HEK293T (cell line): ENCODE measurements at regions of chr13 and their contacts with region 1.

Region 1: GRCh38 chr13:95349267-95349666 is 48.0 kb upstream of the ABCC4 start:
- DNase-seq: no peak

Region 2: GRCh38 chr13:95156208-95156607 is 193.1 kb before region 1 on chr13:
- CTCF ChIA-PET with region 1: interaction called, 11 read pairs
- POLR2A ChIA-PET with region 1: no interaction called
- DNase-seq: no peak

Region 3: GRCh38 chr13:95246292-95247082 is 102.8 kb before region 1 on chr13:
- CTCF ChIA-PET with region 1: no interaction called
- POLR2A ChIA-PET with region 1: no interaction called
- DNase-seq: no peak

Region 4: GRCh38 chr13:95335667-95336066 is 13.6 kb before region 1 on chr13:
- CTCF ChIA-PET with region 1: no interaction called
- POLR2A ChIA-PET with region 1: no interaction called
- DNase-seq: no peak